ENCODE measurements at regions of chr11 and their contacts with region 1.

Region 1: GRCh38 chr11:3807909-3808860 is at the start of gene PGAP2:
- DNase-seq: no peak
- ATAC-seq: peak; percentile 89
- H3K4me3 ChIP-seq: peak within 1 kb of the TSS; percentile 92
- H3K27ac ChIP-seq: peak within 1 kb of the TSS; percentile 57
- H3K4me1 ChIP-seq: no peaks in the 10 kb centered on the region
- H3K27me3 ChIP-seq: no peaks in the 10 kb centered on the region
- CTCF ChIP-seq: peak; percentile 71 to 75 (median 73)
- EP300 ChIP-seq: no peak
- POLR2A ChIP-seq: peak; percentile 46; the same call in 1 of the 2 replicates
- RAD21 ChIP-seq: peak; percentile 62
- polyA plus RNA-seq, gene PGAP2: 25.4 to 37.4 TPM

Region 2: DNA sequence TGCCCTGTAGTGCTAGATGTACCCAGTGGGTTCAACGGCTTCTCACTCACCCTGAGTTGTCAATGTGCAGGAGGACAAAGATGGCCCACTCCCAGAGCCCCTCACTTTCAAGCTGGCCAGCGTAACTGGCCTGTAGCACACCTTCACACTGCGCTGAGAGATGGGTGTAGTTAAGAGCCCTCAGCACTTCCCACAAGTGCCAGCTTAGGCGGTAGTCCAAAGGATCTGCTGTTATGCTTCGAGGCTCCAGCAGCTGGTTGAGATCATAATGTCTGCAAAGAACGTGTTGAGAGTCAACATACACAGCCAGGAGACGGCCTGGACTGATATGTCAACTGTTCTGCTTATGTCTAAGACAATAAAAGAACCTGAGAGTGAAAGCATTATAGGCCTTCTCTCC is 122.3 kb before region 1 on chr11:
- CTCF ChIA-PET with region 1: interaction called, 12 read pairs
- POLR2A ChIA-PET with region 1: interaction called, 3 read pairs
- RAD21 ChIA-PET with region 1: interaction called, 3 read pairs
- SMC1A ChIA-PET with region 1: interaction called, 3 read pairs
- in situ Hi-C with region 1: no loop called
- intact Hi-C with region 1: no loop called
- DNase-seq: no peak
- ATAC-seq: no peak
- H3K4me3 ChIP-seq: no peak overlapping the region
- H3K27ac ChIP-seq: no peak overlapping the region
- H3K4me1 ChIP-seq: no peaks in the 10 kb centered on the region
- H3K27me3 ChIP-seq: no peaks in the 10 kb centered on the region
- CTCF ChIP-seq: no peak
- EP300 ChIP-seq: no peak
- POLR2A ChIP-seq: no peak
- RAD21 ChIP-seq: no peak

Region 3: DNA sequence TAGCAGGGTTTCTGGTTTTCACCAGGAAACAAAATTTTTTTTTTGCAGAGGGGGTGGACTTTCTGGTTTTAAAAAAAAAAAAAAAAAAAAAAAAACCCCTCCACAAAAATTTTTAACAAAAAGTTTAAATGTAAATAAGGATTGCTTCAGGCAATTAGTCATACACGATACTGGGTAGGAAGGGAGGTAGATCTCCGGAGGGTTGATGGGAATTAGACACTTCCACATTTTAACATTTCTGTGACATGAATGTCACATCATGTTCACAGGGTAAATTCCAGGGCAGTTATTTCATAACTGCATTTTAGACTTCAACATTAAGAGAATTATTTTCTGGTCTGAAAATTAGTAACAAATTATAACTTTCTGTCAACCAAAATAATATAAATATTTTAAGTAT is 26.8 kb before region 1 on chr11:
- CTCF ChIA-PET with region 1: interaction called, 44 read pairs
- POLR2A ChIA-PET with region 1: interaction called, 4 read pairs
- RAD21 ChIA-PET with region 1: interaction called, 25 read pairs
- SMC1A ChIA-PET with region 1: interaction called, 28 read pairs
- in situ Hi-C with region 1: no loop called
- intact Hi-C with region 1: no loop called
- DNase-seq: no peak
- ATAC-seq: no peak
- H3K4me3 ChIP-seq: no peak overlapping the region
- H3K27ac ChIP-seq: no peak overlapping the region; the same call in 1 of the 2 replicates
- H3K4me1 ChIP-seq: peaks cover 12% of the 10 kb centered on the region
- H3K27me3 ChIP-seq: no peaks in the 10 kb centered on the region
- CTCF ChIP-seq: no peak
- EP300 ChIP-seq: no peak
- POLR2A ChIP-seq: no peak
- RAD21 ChIP-seq: no peak

Region 4: DNA sequence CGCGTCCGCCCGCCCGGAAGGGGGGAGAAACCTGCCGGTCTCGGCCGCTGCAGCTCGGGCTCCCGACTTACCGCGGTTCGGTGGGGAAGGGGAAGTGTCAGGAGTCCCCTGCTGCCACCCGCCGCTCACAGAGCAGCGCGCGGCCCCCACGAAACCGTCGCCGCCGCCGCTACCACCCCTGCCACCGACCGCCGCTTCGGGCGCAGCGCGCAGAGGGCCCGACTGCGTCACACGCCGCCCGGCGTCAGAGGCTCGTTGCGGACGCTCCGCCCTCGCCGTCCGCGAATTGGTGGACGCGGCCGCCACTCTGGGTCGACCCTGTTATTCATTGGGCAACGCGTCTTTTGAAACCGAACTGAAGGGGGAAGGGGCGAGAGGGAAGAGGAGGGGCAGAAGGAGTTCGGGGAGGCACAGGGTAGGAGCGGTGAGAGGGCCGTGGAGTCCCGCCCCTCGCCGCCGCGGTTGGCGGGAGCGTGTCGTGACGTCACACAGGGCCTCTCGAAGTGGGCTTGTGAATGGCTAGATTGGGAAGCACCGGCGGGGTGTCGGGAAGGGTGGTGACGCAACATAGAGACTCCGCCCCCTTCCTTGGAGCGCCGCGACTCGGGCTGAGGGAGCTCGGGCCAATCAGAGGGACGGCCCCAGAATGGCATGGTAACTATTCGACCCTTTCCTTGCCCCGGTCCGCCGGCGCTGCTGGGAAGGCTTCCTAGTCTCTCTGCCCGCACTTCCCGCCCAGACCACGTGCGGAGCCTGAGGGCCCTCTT is 10.7 kb before region 1 on chr11 and contains the start of gene NUP98:
- CTCF ChIA-PET with region 1: interaction called, 30 read pairs
- POLR2A ChIA-PET with region 1: interaction called, 7 read pairs
- RAD21 ChIA-PET with region 1: interaction called, 22 read pairs
- SMC1A ChIA-PET with region 1: interaction called, 11 read pairs
- in situ Hi-C with region 1: no loop called
- intact Hi-C with region 1: no loop called
- DNase-seq: peak; percentile 99
- ATAC-seq: peak; percentile 94
- H3K4me3 ChIP-seq: peak within 1 kb of the TSS; percentile 91
- H3K27ac ChIP-seq: peak within 1 kb of the TSS; percentile 97
- H3K4me1 ChIP-seq: peaks cover 7% of the 10 kb centered on the region; the same call in 1 of the 2 replicates
- H3K27me3 ChIP-seq: no peaks in the 10 kb centered on the region
- CTCF ChIP-seq: no peak
- EP300 ChIP-seq: no peak; a peak in 1 of 4 replicates
- POLR2A ChIP-seq: peak; percentile 97
- RAD21 ChIP-seq: no peak
- polyA plus RNA-seq, gene NUP98: 21.7 to 23.7 TPM

Region 5: DNA sequence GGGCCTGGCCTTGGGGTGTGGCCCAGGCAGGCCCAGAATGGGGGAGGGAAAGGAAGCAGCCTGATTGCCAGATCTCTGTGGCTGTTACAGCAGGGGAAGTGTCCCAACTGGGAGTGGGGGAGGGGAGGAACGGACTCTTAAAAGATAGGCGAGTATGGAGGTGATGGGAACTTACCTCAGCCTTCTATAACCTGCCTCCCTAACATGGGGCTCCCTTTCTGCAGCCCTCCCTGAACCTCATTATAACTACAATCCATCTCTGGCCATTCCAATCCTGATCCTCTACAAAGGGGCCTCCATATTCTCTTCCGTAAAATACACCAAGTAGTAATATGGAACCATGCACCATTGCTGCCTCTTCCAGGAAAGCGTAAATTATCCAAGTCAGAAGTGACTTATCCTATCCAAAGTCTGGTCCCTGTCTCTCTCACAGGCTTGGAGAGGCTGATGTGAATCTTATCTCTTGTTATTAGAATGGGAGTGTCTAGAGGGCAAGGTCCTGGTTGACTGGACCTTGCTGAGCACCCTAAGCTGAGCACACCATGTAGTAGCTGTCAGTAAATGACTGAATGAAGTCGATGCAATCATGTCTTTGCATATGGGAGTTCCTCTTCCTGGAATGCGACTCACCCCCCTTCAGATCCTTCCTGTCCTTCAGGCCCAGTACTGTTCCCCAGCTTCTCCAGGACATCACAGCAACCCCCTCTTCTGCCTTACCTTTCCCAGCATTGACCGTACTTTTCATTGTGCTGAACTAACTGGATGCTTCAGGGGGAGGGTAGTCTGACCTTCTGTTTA is 26.7 kb after region 1 on chr11:
- CTCF ChIA-PET with region 1: interaction called, 22 read pairs
- POLR2A ChIA-PET with region 1: interaction called, 4 read pairs
- RAD21 ChIA-PET with region 1: interaction called, 20 read pairs
- SMC1A ChIA-PET with region 1: interaction called, 33 read pairs
- in situ Hi-C with region 1: no loop called
- intact Hi-C with region 1: no loop called
- DNase-seq: no peak
- ATAC-seq: peak; percentile 2; the same call in 1 of the 3 replicates
- H3K4me3 ChIP-seq: peak overlapping the region; percentile 37
- H3K27ac ChIP-seq: peak overlapping the region; percentile 50
- H3K4me1 ChIP-seq: peaks cover 41% of the 10 kb centered on the region
- H3K27me3 ChIP-seq: no peaks in the 10 kb centered on the region
- CTCF ChIP-seq: no peak
- EP300 ChIP-seq: no peak
- POLR2A ChIP-seq: no peak
- RAD21 ChIP-seq: no peak

Region 6: GRCh38 chr11:3905080-3905953 is 97.1 kb after region 1 on chr11:
- CTCF ChIA-PET with region 1: no interaction called
- POLR2A ChIA-PET with region 1: no interaction called
- RAD21 ChIA-PET with region 1: no interaction called
- SMC1A ChIA-PET with region 1: no interaction called
- in situ Hi-C with region 1: no loop called
- intact Hi-C with region 1: no loop called
- DNase-seq: no peak
- ATAC-seq: peak; percentile 89
- H3K4me3 ChIP-seq: no peak overlapping the region
- H3K27ac ChIP-seq: no peak overlapping the region
- H3K4me1 ChIP-seq: peaks cover 51% of the 10 kb centered on the region
- H3K27me3 ChIP-seq: no peaks in the 10 kb centered on the region
- CTCF ChIP-seq: no peak
- EP300 ChIP-seq: no peak
- POLR2A ChIP-seq: no peak
- RAD21 ChIP-seq: no peak

Measured in GM12878 (cell line).